Naive thymus-derived CD4-positive, alpha-beta T cell (primary cell): ENCODE measurements at regions of chr10 and their contacts with region 1.

Region 1: GRCh38 chr10:3757638-3758490 is 27.1 kb downstream of the KLF6 start:
- DNase-seq: peak in 1 of 9 donors; percentile 62
- ATAC-seq: peak; percentile 80
- H3K4me3 ChIP-seq: no peak overlapping the region
- H3K4me3 Mint-ChIP-seq: peak overlapping the region in 2 of 10 donors; percentile 56 to 82
- H3K27ac ChIP-seq: no peak overlapping the region
- H3K27ac Mint-ChIP-seq: peak overlapping the region in 4 of 9 donors; percentile 65 to 99 (median 83)
- H3K4me1 ChIP-seq: peaks cover 0 to 56% of the 10 kb centered on the region in 2 donors
- H3K4me1 Mint-ChIP-seq: peaks cover 5 to 79% (median 24%) of the 10 kb centered on the region in 7 donors
- H3K27me3 ChIP-seq: no peaks in the 10 kb centered on the region
- H3K27me3 Mint-ChIP-seq: no peaks in the 10 kb centered on the region

Region 2: DNA sequence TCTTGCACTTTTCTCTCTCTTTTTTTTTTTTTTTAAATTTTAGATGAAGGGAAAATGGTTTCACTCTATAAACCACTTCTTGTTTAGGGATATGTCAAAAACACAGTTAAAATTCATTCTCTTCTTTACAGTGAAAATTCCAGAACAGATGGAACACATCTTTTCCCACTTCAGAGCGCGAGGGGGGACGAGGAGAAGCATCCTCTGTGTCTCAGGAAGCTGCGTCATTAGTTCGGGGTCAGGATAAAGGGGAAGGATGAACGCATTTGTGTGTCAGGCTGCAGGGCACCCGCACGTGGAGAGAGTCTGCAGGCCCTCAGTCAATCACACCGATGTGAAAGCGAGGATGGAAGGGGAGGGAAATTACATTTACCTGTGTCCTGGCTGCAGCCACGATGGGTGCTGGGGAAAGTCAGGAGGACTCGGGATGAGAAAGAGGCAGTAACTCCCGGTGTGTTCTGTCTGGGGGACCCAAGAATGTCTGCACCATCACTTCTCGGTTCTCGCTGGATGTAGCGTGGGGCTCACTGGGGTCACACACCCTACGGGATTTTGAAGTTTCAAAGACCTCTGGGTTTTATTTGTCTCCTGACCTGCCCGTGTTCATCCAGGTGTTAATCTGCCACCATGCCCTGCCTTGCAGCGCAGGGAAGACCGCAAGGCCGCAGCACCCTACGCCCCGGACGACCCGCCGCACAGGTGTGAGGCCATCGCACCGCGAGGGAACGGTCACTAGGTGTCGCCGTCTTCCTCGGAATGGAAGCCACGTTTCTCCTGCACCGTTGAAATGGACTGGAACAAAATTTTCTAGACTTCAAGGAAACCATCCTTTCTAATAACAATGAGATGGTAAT is 518.6 kb before region 1 on chr10:
- CTCF ChIA-PET with region 1: no interaction called
- POLR2A ChIA-PET with region 1: no interaction called
- intact Hi-C with region 1: loop called in 1 of 2 experiments (anchors 5 kb)
- DNase-seq: peak; percentile 23 to 72 (median 53)
- ATAC-seq: peak; percentile 78
- H3K4me3 ChIP-seq: no peak overlapping the region
- H3K4me3 Mint-ChIP-seq: peak overlapping the region in 2 of 10 donors; percentile 24 to 32
- H3K27ac ChIP-seq: no peak overlapping the region
- H3K27ac Mint-ChIP-seq: no peak overlapping the region
- H3K4me1 ChIP-seq: no peaks in the 10 kb centered on the region
- H3K4me1 Mint-ChIP-seq: peaks cover 0 to 8% (median 4%) of the 10 kb centered on the region in 7 donors
- H3K27me3 ChIP-seq: no peaks in the 10 kb centered on the region
- H3K27me3 Mint-ChIP-seq: peaks cover 0 to 33% (median 10%) of the 10 kb centered on the region in 5 donors

Region 3: GRCh38 chr10:3467052-3467951 is 290.6 kb before region 1 on chr10:
- CTCF ChIA-PET with region 1: no interaction called
- POLR2A ChIA-PET with region 1: no interaction called
- intact Hi-C with region 1: loop called in 1 of 2 experiments (anchors 5 kb)
- DNase-seq: peak in 1 of 9 donors; percentile 38
- ATAC-seq: peak; percentile 47
- H3K4me3 ChIP-seq: no peak overlapping the region
- H3K4me3 Mint-ChIP-seq: peak overlapping the region in 5 of 10 donors; percentile 6 to 74 (median 43)
- H3K27ac ChIP-seq: no peak overlapping the region
- H3K27ac Mint-ChIP-seq: peak overlapping the region in 2 of 9 donors; percentile 13 to 85
- H3K4me1 ChIP-seq: peaks cover 5 to 14% of the 10 kb centered on the region in 2 donors
- H3K4me1 Mint-ChIP-seq: peaks cover 12 to 58% (median 25%) of the 10 kb centered on the region in 7 donors
- H3K27me3 ChIP-seq: no peaks in the 10 kb centered on the region
- H3K27me3 Mint-ChIP-seq: peaks cover 0 to 8% (median 0%) of the 10 kb centered on the region in 5 donors

Region 4: GRCh38 chr10:3623746-3624145 is 134.1 kb before region 1 on chr10:
- CTCF ChIA-PET with region 1: no interaction called
- POLR2A ChIA-PET with region 1: no interaction called
- intact Hi-C with region 1: loop called in 1 of 2 experiments (anchors 5 kb)
- DNase-seq: no peak
- ATAC-seq: no peak
- H3K4me3 ChIP-seq: no peak overlapping the region
- H3K4me3 Mint-ChIP-seq: no peak overlapping the region
- H3K27ac ChIP-seq: no peak overlapping the region
- H3K27ac Mint-ChIP-seq: no peak overlapping the region
- H3K4me1 ChIP-seq: peaks cover 0 to 4% of the 10 kb centered on the region in 2 donors
- H3K4me1 Mint-ChIP-seq: peaks cover 0 to 21% (median 7%) of the 10 kb centered on the region in 7 donors
- H3K27me3 ChIP-seq: no peaks in the 10 kb centered on the region
- H3K27me3 Mint-ChIP-seq: peaks cover 0 to 16% (median 9%) of the 10 kb centered on the region in 5 donors

Region 5: DNA sequence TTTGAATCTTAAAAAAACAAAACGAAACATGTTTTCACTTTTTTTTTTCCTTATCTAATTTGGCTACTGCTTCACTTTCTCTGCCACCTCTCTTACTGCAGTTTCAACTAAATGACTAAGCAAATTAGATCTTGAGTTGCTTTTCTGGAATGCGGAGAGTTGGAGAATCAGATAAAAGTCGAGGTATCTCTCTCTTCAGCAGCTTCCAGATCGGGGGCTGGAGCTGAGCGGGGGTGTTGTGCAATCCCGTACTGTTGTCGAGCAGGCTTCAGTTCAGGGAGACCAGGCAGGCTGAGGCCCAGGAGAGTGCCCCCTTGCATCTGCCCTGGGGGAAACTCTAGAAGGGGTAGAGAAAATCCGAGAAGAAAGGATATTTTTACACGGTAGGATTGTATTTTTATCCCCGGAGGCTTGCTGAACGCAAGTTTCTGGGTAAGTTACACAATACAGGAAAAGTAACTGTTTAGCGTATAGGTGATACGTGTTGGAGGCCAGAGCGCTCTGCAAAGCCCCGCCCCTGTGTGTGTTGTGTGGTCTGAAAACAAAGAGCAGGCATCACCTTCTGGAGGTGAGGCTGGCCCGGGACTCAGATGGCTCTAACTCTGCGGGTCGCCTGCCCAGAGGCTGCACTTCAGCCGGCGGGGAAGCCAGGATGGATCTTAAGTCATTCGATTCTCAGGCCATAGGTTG is 89.4 kb before region 1 on chr10:
- CTCF ChIA-PET with region 1: no interaction called
- POLR2A ChIA-PET with region 1: no interaction called
- intact Hi-C with region 1: loop called in 1 of 2 experiments (anchors 1 kb)
- DNase-seq: peak; percentile 34 to 85 (median 77)
- ATAC-seq: peak; percentile 91
- H3K4me3 ChIP-seq: peak overlapping the region; percentile 63
- H3K4me3 Mint-ChIP-seq: peak overlapping the region; percentile 82 to 98 (median 88)
- H3K27ac ChIP-seq: peak overlapping the region; percentile 65
- H3K27ac Mint-ChIP-seq: peak overlapping the region; percentile 36 to 96 (median 93)
- H3K4me1 ChIP-seq: peaks cover 33% of the 10 kb centered on the region in 2 donors
- H3K4me1 Mint-ChIP-seq: peaks cover 27 to 51% (median 40%) of the 10 kb centered on the region in 7 donors
- H3K27me3 ChIP-seq: no peaks in the 10 kb centered on the region
- H3K27me3 Mint-ChIP-seq: no peaks in the 10 kb centered on the region

Region 6: GRCh38 chr10:4034907-4035598 is 277.2 kb after region 1 on chr10:
- CTCF ChIA-PET with region 1: no interaction called
- POLR2A ChIA-PET with region 1: no interaction called
- intact Hi-C with region 1: loop called in 1 of 2 experiments (anchors 2 kb)
- DNase-seq: peak in 7 of 9 donors; percentile 6 to 41 (median 30)
- ATAC-seq: peak; percentile 78
- H3K4me3 ChIP-seq: peak overlapping the region; percentile 44
- H3K4me3 Mint-ChIP-seq: peak overlapping the region; percentile 73 to 91 (median 82)
- H3K27ac ChIP-seq: peak overlapping the region; percentile 22
- H3K27ac Mint-ChIP-seq: peak overlapping the region; percentile 67 to 91 (median 82)
- H3K4me1 ChIP-seq: peaks cover 4 to 11% of the 10 kb centered on the region in 2 donors
- H3K4me1 Mint-ChIP-seq: peaks cover 8 to 37% (median 17%) of the 10 kb centered on the region in 7 donors
- H3K27me3 ChIP-seq: no peaks in the 10 kb centered on the region
- H3K27me3 Mint-ChIP-seq: no peaks in the 10 kb centered on the region

Region 7: GRCh38 chr10:4241724-4242345 is 484.0 kb after region 1 on chr10:
- CTCF ChIA-PET with region 1: no interaction called
- POLR2A ChIA-PET with region 1: no interaction called
- intact Hi-C with region 1: loop called in 1 of 2 experiments (anchors 10 kb)
- DNase-seq: no peak
- ATAC-seq: no peak
- H3K4me3 ChIP-seq: no peak overlapping the region
- H3K4me3 Mint-ChIP-seq: no peak overlapping the region
- H3K27ac ChIP-seq: no peak overlapping the region
- H3K27ac Mint-ChIP-seq: no peak overlapping the region
- H3K4me1 ChIP-seq: no peaks in the 10 kb centered on the region
- H3K4me1 Mint-ChIP-seq: peaks cover 0 to 26% (median 4%) of the 10 kb centered on the region in 7 donors
- H3K27me3 ChIP-seq: no peaks in the 10 kb centered on the region
- H3K27me3 Mint-ChIP-seq: peaks cover 0 to 7% (median 0%) of the 10 kb centered on the region in 5 donors